ENCODE measurements at regions of chr3 and their contacts with region 1.

Region 1: DNA sequence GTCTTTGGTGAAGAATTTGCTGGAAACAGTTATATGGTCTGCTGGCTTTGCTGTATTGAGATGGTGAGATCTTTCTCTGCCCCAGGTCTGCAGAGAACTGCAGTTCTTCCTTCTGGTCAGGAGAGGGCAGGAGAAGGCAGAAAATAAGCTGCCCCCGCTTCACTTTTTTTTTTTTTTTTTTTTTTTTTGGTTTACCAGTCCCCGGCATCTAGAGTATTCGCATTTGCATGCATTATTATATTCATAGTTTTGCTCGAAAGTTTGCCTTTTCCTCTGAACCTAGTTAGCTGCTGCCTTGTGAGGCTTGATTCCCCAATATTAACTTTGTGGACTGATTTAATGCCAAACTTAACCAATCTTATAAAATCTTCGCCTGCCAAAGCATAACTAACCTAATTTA is 10.6 kb upstream of the PARL start:
- DNase-seq: peak; percentile 73
- ATAC-seq: peak; percentile 96
- H3K4me3 ChIP-seq: no peak overlapping the region
- H3K4me3 Mint-ChIP-seq: no peak overlapping the region
- H3K27ac ChIP-seq: no peak overlapping the region
- H3K27ac Mint-ChIP-seq: no peak overlapping the region
- H3K4me1 ChIP-seq: peaks cover 0 to 2% of the 10 kb centered on the region in 2 donors
- H3K4me1 Mint-ChIP-seq: no peaks in the 10 kb centered on the region
- H3K27me3 ChIP-seq: peaks cover 0 to 9% (median 0%) of the 10 kb centered on the region in 4 experiments
- H3K27me3 Mint-ChIP-seq: peaks cover 37% of the 10 kb centered on the region
- CTCF ChIP-seq: peak; percentile 86

Region 2: GRCh38 chr3:183073839-183074238 is 821.5 kb before region 1 on chr3:
- CTCF ChIA-PET with region 1: no interaction called
- POLR2A ChIA-PET with region 1: interaction called, 11 read pairs
- intact Hi-C with region 1: no loop called
- DNase-seq: no peak
- ATAC-seq: no peak
- H3K4me3 ChIP-seq: no peak overlapping the region
- H3K4me3 Mint-ChIP-seq: no peak overlapping the region
- H3K27ac ChIP-seq: no peak overlapping the region
- H3K27ac Mint-ChIP-seq: no peak overlapping the region
- H3K4me1 ChIP-seq: no peaks in the 10 kb centered on the region
- H3K4me1 Mint-ChIP-seq: no peaks in the 10 kb centered on the region
- H3K27me3 ChIP-seq: no peaks in the 10 kb centered on the region
- H3K27me3 Mint-ChIP-seq: no peaks in the 10 kb centered on the region
- CTCF ChIP-seq: no peak

Region 3: DNA sequence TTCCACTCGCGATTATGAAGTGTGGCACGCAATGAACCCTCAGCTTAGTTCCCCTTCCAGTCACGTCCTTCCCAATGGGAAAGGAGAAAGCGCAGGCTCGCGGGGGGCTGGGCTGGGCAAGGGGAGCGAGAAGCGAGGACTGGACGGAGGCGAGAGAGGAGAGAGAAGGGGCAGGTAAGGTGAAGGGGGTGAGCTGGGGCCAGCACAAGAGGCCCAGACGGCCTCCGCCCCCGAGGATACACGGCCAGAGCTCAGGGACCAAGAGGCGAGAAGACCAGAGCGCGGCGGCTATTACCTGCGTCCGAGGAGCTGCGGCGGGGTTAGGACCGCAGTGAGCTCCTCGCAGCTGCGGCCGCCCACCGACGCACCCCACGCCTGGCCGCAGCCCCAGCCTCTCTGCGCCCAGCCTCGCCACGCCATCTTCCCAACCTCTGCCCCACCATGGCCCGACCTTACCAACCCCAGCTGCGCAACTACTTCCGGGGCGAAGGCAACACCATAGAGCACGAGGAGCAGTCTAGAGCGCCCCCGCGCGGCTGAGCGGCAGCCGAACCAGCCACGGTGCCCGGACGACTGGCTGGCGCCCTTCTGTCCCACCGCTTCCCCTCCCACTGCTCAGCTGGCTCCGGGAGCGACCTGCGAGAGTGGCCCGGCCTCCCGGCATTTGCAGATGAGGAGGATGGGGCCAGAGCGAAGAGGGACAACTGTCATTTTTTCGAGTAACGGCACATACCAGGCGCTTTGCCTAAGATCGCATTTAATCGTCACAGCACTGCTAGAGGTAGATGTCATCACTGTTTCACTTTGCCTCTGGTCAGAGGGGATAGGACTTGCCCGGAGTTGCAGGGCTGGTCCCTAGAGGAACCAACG is 10.6 kb before region 1 on chr3 and contains the start of gene PARL:
- CTCF ChIA-PET with region 1: interaction called, 44 read pairs
- POLR2A ChIA-PET with region 1: no interaction called
- intact Hi-C with region 1: loop called (anchors 1 kb)
- DNase-seq: peak; percentile 95
- ATAC-seq: peak; percentile 100
- H3K4me3 ChIP-seq: peak within 1 kb of the TSS; percentile 68 to 96 (median 84)
- H3K4me3 Mint-ChIP-seq: peak within 1 kb of the TSS; percentile 92
- H3K27ac ChIP-seq: peak within 1 kb of the TSS; percentile 39 to 75
- H3K27ac Mint-ChIP-seq: peak within 1 kb of the TSS; percentile 94
- H3K4me1 ChIP-seq: peaks cover 11 to 19% of the 10 kb centered on the region in 2 donors
- H3K4me1 Mint-ChIP-seq: peaks cover 36% of the 10 kb centered on the region
- H3K27me3 ChIP-seq: peaks cover 0 to 6% (median 0%) of the 10 kb centered on the region in 4 experiments
- H3K27me3 Mint-ChIP-seq: peaks cover 3% of the 10 kb centered on the region
- CTCF ChIP-seq: peak; percentile 90
- total RNA-seq, gene PARL: 46.7 and 51.2 TPM in 2 replicates

Region 4: GRCh38 chr3:184005941-184006507 is 110.7 kb after region 1 on chr3:
- CTCF ChIA-PET with region 1: interaction called, 10 read pairs
- POLR2A ChIA-PET with region 1: no interaction called
- intact Hi-C with region 1: no loop called
- DNase-seq: peak; percentile 63
- ATAC-seq: peak; percentile 84
- H3K4me3 ChIP-seq: peak overlapping the region in 1 of 5 experiments; percentile 11
- H3K4me3 Mint-ChIP-seq: peak overlapping the region; percentile 71
- H3K27ac ChIP-seq: peak overlapping the region in 1 of 2 donors; percentile 47
- H3K27ac Mint-ChIP-seq: peak overlapping the region; percentile 66
- H3K4me1 ChIP-seq: peaks cover 29 to 30% of the 10 kb centered on the region in 2 donors
- H3K4me1 Mint-ChIP-seq: peaks cover 31% of the 10 kb centered on the region
- H3K27me3 ChIP-seq: no peaks in the 10 kb centered on the region
- H3K27me3 Mint-ChIP-seq: no peaks in the 10 kb centered on the region
- CTCF ChIP-seq: no peak

Region 5: DNA sequence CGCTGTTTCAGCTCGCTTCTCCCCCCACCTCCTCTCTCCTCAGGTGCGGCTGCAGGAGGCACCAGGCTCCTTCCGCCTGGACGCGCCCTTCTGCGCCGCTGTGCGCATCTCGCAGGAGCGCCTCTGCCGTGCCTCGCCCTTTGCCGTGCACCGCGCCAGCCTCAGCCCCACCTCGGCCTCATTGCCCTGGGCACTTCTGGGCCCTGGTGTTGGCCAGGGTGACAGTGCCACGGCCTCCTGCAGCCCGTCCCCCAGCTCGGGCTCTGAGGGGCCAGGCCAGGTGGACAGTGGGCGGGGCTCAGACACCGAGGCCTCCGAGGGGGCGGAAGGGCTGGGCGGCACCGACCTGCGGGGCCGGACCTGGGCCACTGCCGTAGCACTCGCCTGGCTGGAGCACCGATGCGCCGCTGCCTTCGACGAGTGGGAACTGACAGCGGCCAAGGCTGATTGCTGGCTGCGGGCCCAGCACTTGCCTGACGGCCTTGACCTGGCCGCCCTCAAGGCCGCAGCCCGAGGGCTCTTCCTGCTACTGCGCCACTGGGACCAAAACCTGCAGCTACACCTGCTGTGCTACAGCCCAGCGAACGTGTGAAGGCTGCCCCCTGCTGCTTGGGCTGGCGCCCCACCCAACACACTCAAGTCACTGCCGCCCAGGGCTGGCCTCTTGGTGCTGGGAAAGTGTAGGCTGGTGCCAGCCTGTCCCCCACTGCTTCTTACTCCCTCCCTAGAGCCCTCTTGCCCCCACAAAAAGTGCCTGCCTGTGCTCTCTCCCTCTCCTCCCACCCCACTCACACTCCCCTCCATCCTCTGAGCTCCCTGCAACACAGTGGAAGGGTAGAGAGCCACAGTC is 346.4 kb after region 1 on chr3:
- CTCF ChIA-PET with region 1: interaction called, 12 read pairs
- POLR2A ChIA-PET with region 1: no interaction called
- intact Hi-C with region 1: no loop called
- DNase-seq: peak; percentile 33
- ATAC-seq: peak; percentile 57
- H3K4me3 ChIP-seq: no peak overlapping the region
- H3K4me3 Mint-ChIP-seq: no peak overlapping the region
- H3K27ac ChIP-seq: no peak overlapping the region
- H3K27ac Mint-ChIP-seq: no peak overlapping the region
- H3K4me1 ChIP-seq: no peaks in the 10 kb centered on the region
- H3K4me1 Mint-ChIP-seq: no peaks in the 10 kb centered on the region
- H3K27me3 ChIP-seq: peaks cover 0 to 3% (median 0%) of the 10 kb centered on the region in 4 experiments
- H3K27me3 Mint-ChIP-seq: no peaks in the 10 kb centered on the region
- CTCF ChIP-seq: peak; percentile 10

Region 6: GRCh38 chr3:184289426-184289938 is 394.2 kb after region 1 on chr3:
- CTCF ChIA-PET with region 1: interaction called, 8 read pairs
- POLR2A ChIA-PET with region 1: no interaction called
- intact Hi-C with region 1: loop called (anchors 1 kb)
- DNase-seq: peak; percentile 56
- ATAC-seq: peak; percentile 49
- H3K4me3 ChIP-seq: no peak overlapping the region
- H3K4me3 Mint-ChIP-seq: no peak overlapping the region
- H3K27ac ChIP-seq: no peak overlapping the region
- H3K27ac Mint-ChIP-seq: no peak overlapping the region
- H3K4me1 ChIP-seq: no peaks in the 10 kb centered on the region
- H3K4me1 Mint-ChIP-seq: no peaks in the 10 kb centered on the region
- H3K27me3 ChIP-seq: peaks cover 0 to 15% (median 4%) of the 10 kb centered on the region in 4 experiments
- H3K27me3 Mint-ChIP-seq: peaks cover 23% of the 10 kb centered on the region
- CTCF ChIP-seq: peak; percentile 66